Psoas muscle (tissue), 8 donors: ENCODE measurements at regions of chr11 and their contacts with region 1.

Region 1: DNA sequence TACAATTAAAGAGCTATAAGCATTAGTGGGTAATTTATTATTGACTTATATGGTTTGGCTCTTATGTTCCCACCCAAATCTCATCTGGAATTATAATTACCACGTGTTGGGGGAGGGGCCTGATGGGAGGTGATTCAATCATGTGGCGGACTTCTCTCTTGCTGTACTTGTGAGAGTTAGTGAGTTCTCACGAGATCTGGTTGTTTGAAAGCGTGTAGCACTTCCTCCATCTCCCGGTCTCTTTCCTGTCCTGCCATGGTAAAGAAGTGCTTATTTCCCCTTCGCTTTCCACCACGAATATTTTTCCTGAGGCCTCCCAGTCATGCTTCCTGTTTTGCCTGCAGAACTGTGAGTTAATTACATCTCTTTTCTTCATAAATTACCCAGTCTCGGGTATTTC is 28.1 kb upstream of the CHORDC1 start:
- DNase-seq: no peak
- ATAC-seq: no peak
- H3K4me3 ChIP-seq: no peak overlapping the region
- H3K27ac ChIP-seq: no peak overlapping the region
- H3K4me1 ChIP-seq: no peaks in the 10 kb centered on the region
- H3K27me3 ChIP-seq: no peaks in the 10 kb centered on the region
- CTCF ChIP-seq: no peak

Region 2: GRCh38 chr11:90274362-90274761 is 23.4 kb after region 1 on chr11:
- intact Hi-C with region 1: no loop called
- DNase-seq: no peak
- ATAC-seq: no peak
- H3K4me3 ChIP-seq: no peak overlapping the region
- H3K27ac ChIP-seq: no peak overlapping the region
- H3K4me1 ChIP-seq: no peaks in the 10 kb centered on the region
- H3K27me3 ChIP-seq: no peaks in the 10 kb centered on the region
- CTCF ChIP-seq: no peak

Region 3: DNA sequence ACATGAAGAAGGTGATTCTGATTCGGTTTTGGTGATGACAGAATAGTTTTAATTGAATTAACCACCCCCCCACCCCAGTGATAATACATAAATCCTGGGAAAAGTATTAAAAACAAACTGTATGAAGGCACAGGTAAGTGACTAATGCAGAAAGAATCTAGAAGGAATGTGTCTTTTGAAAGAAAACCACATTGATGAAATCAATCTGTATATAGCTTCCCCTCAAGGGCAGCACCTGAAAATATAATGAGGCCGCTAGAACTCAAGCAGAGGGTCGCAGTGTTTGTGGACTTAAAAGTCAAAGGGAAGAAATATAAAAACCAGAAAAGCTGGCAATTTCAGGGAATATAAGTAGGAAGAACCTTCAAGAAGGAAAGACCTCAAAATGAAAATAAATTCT is 552.4 kb after region 1 on chr11:
- intact Hi-C with region 1: no loop called
- DNase-seq: no peak
- ATAC-seq: no peak
- H3K4me3 ChIP-seq: no peak overlapping the region
- H3K27ac ChIP-seq: no peak overlapping the region
- H3K4me1 ChIP-seq: no peaks in the 10 kb centered on the region
- H3K27me3 ChIP-seq: no peaks in the 10 kb centered on the region
- CTCF ChIP-seq: no peak

Region 4: DNA sequence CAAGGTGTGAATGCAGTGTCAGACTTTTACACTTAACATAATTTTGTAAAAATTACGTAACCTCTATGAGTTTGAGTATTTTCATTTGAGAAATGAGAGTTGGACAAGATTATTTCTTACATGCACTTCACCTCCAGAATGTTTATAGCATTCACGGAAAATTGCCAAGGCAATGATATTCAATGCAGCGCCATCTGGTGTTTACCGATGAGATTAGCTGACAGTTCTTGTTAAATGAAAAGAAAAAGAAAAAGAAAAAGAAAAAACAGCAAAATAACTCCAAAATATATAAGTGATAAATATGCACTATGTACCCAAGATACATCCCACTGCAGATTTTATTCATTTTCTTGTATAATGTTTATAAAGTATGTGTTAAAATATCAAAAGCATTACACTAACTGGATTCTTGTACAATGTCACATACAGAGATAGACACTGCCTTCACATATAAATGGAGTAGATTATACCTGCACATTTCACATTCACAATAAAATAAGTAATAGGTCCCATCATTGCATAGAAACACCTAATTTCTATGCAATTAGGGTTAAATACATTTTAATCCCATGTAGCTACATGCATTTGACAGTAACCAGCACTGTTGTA is 997.3 kb after region 1 on chr11:
- intact Hi-C with region 1: loop called in 1 of 2 experiments (anchors 10 kb)
- DNase-seq: no peak
- ATAC-seq: no peak
- H3K4me3 ChIP-seq: no peak overlapping the region
- H3K27ac ChIP-seq: no peak overlapping the region
- H3K4me1 ChIP-seq: no peaks in the 10 kb centered on the region
- H3K27me3 ChIP-seq: no peaks in the 10 kb centered on the region
- CTCF ChIP-seq: peak; percentile 50